ENCODE measurements at regions of chr16 and their contacts with region 1.

Region 1: GRCh38 chr16:813204-813915 is 12.8 kb upstream of the GNG13 start:
- DNase-seq: peak; percentile 85
- H3K4me3 Mint-ChIP-seq: no peak overlapping the region
- H3K27ac Mint-ChIP-seq: no peak overlapping the region
- H3K4me1 Mint-ChIP-seq: peaks cover 7% of the 10 kb centered on the region
- H3K27me3 Mint-ChIP-seq: peaks cover 17% of the 10 kb centered on the region

Region 2: DNA sequence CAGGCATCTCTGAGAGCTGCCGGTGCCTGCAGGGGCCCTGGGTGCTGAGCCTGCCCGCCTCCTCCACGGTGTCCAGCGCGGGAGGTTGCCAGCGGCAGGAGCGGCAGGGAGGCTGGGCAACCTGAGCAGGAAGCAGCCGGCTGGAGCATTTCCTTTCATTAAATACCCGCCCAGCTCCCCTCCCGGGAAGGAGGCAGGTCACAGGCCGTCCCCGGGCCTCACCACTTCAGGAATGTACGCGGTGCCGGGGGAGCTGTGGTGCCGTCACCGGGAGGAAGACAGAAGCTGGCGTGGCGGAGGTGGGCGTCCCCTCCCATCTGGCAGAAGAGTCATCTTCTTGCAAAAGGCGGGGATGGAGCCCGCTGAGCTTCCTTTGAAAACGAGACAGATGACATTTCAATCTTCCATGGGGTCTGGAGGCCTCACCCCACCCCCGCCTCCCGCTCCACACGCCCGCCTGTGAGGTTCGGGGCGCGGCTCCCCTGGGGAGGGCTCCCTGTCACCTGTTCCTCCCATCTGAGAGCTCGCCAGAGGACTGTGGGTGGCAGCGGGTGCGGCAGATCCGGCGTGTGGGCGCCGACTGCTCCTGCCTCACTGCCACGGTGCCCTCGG is 184.2 kb after region 1 on chr16:
- intact Hi-C with region 1: no loop called
- DNase-seq: peak; percentile 76
- H3K4me3 Mint-ChIP-seq: peak overlapping the region; percentile 64
- H3K27ac Mint-ChIP-seq: peak overlapping the region; percentile 41
- H3K4me1 Mint-ChIP-seq: peaks cover 18% of the 10 kb centered on the region
- H3K27me3 Mint-ChIP-seq: peaks cover 36% of the 10 kb centered on the region

Region 3: DNA sequence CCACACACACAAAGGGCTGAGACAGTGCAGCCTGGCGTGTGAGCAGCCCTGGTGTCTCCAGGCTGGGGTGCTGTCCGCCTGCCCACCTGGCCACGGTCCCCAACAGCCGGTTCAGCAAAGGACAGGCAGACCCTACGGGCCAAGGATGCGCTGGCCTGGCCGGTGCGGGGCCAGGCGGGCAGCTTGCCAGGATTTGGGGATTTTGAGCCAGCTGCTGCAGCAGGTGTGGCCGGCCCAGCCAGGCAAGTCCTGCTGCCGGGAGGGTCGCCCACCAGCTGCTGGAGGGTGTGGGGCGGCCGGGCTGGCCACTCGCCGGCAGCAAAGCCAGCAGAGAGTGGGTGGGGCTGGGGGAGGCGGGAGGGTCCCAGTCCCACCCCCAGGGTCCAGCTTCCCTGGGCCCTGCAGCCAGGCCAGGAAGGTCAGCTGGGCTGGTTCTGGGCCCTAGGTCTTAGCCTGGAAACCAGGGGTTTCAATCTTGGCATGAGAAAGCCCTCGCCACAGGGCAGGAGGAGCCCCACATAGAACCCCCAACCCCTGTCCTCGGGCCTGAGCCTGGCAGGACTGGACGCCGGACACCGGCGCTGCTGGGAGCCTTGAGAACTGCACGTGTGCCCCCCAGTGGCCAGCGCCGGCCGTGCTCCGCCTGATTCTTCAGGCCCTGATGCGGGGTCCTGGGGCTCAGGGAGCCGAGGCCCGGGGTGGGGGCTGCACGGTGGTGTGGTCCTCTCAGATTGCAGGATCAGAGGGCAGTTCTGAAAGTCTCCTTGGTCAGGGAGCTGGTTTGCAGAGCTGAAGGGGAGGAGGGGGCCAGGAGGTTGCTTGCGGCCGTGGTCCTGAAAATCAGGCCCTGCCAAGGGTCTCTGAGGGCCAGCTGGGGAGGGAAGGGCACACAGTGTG is 241.5 kb after region 1 on chr16:
- intact Hi-C with region 1: loop called (anchors 5 kb)
- DNase-seq: peak; percentile 76
- H3K4me3 Mint-ChIP-seq: no peak overlapping the region
- H3K27ac Mint-ChIP-seq: no peak overlapping the region
- H3K4me1 Mint-ChIP-seq: no peaks in the 10 kb centered on the region
- H3K27me3 Mint-ChIP-seq: no peaks in the 10 kb centered on the region

Measured in activated CD4-positive, alpha-beta T cell treated with anti-CD3 and anti-CD28 coated beads, Interleukin-2, amount 10 ng/mL, durations not matched to agents 24 days and 14 days (primary cell).